A549 (cell line): ENCODE measurements at regions of chr10 and their contacts with region 1.

Region 1: DNA sequence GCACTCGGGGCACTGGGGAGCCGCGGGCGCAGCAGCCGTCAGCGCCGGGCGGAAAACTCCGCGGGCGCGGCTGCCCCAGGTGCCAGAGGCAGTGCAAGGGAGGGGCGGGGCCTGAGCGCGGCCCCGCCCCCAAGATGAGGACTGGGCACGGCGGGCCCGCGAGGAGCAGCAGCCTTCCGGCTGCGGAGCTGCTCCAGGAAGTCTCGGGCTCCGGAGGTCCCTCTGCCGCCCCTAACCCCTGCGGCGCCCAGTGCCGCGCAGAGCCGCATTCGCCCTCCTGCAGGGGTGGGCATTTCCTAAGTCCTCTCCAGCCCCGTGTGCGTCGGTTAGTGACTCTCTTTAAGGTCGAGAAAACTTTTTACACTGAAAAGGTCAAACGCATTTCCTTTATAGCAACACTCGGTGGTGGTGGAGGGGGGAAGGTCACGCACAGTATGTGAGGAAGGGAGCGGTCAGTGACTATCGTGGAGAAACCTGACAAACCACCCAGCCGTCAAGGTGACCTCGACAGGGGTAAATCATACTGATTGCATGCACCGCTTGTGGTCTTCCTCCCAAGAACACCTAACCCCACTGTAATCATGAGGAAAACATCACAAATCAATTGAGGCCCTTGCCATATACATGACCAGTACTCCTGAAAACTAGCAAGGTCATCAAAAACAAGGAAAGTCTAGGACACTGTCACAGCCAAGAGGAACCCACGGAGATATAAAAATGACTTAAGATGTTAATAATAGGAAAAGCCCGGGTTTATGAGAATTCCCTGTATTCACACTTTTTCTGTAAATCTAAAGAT is at the start of gene ANXA11:
- DNase-seq: peak; percentile 78 to 82
- ATAC-seq: peak; percentile 62 to 73
- H3K4me3 ChIP-seq: peak within 1 kb of the TSS; percentile 95
- H3K27ac ChIP-seq: peak within 1 kb of the TSS; percentile 97
- H3K4me1 ChIP-seq: peaks cover 62% of the 10 kb centered on the region
- CTCF ChIP-seq: no peak
- EP300 ChIP-seq: no peak; a peak in 1 of 5 replicates
- POLR2A ChIP-seq: peak; percentile 87
- RAD21 ChIP-seq: no peak
- polyA plus RNA-seq, gene ANXA11: 92.6 and 123 TPM in 2 replicates

Region 2: GRCh38 chr10:80118674-80119073 is 87.0 kb before region 1 on chr10:
- CTCF ChIA-PET with region 1: no interaction called
- POLR2A ChIA-PET with region 1: no interaction called
- DNase-seq: no peak
- ATAC-seq: no peak
- H3K4me3 ChIP-seq: no peak overlapping the region
- H3K27ac ChIP-seq: no peak overlapping the region
- H3K4me1 ChIP-seq: no peaks in the 10 kb centered on the region
- CTCF ChIP-seq: no peak
- EP300 ChIP-seq: no peak
- POLR2A ChIP-seq: no peak
- RAD21 ChIP-seq: no peak

Region 3: DNA sequence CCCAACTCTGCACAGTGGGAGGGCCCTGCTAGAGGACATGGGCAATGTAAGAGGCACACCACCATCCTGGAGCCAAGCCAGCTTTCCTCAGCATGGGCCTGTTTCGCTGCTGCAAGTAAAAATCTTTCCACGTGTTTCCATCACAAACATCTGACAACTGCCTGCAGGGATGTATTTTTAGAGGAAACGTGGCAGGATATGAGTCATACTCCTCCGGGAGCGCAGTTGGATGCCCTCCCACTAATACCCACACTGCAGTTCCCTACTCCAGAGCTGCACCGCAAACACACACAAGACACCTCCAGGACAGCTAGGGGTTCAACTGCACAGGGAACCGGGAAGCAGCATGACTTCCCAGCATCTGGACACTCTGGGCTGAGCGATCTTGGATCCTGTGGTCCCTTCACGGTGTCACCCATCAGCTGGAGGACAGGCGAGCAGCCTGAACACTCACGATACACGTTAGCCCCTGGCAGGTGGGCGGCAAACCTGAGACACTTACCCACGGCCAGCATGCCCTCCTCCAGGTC is 47.0 kb before region 1 on chr10:
- CTCF ChIA-PET with region 1: interaction called, 16 read pairs
- POLR2A ChIA-PET with region 1: interaction called, 3 read pairs
- DNase-seq: peak; percentile 75 to 81
- ATAC-seq: peak; percentile 89 to 91
- H3K4me3 ChIP-seq: no peak overlapping the region
- H3K27ac ChIP-seq: peak overlapping the region; percentile 22 to 79; a peak in 5 of 6 replicates
- H3K4me1 ChIP-seq: peaks cover 26% of the 10 kb centered on the region
- CTCF ChIP-seq: no peak
- EP300 ChIP-seq: no peak
- POLR2A ChIP-seq: no peak
- RAD21 ChIP-seq: 0 out of 5 replicates have a peak, but pooled peaks have one; percentile 8 to 12